Gastrocnemius medialis (tissue), 4 donors: ENCODE measurements at regions of chr3 and their contacts with region 1.

Region 1: GRCh38 chr3:138417559-138417982 is 16.8 kb upstream of the ESYT3 start:
- DNase-seq: peak; percentile 64 to 77
- ATAC-seq: peak; percentile 85 to 96
- H3K4me3 ChIP-seq: no peak overlapping the region
- H3K27ac ChIP-seq: no peak overlapping the region
- H3K4me1 ChIP-seq: peaks cover 7 to 10% of the 10 kb centered on the region in 2 donors
- H3K27me3 ChIP-seq: no peaks in the 10 kb centered on the region
- CTCF ChIP-seq: peak; percentile 83 to 93 (median 86)
- POLR2A ChIP-seq: no peak

Region 2: DNA sequence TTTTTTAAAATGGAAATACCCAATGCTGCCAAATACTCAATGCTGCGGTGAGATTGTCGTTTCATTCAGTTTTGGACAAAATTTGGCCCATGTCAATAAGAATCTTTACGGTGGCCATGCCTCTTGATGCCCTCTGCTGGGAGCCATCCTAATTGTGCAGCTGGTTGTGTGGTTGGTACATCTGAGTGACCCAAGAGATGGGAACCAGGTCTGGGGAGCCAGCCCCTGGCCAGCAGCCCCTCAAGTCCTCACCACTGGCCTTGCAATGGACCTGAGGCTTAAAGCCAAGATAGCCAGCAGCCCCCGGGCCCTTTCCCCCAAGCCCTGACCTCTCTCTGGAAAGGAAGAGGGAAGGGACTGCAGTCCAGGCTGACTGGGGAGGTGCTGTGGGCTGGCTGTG is 19.6 kb before region 1 on chr3:
- in situ Hi-C with region 1: no loop called
- intact Hi-C with region 1: loop called (anchors 1 kb)
- DNase-seq: no peak
- ATAC-seq: peak in 1 of 2 donors; percentile 49
- H3K4me3 ChIP-seq: no peak overlapping the region
- H3K27ac ChIP-seq: peak overlapping the region in 1 of 4 donors; percentile 34
- H3K4me1 ChIP-seq: peaks cover 38 to 49% of the 10 kb centered on the region in 2 donors
- H3K27me3 ChIP-seq: no peaks in the 10 kb centered on the region
- CTCF ChIP-seq: peak in 3 of 5 experiments; percentile 26 to 33 (median 32)
- POLR2A ChIP-seq: no peak

Region 3: GRCh38 chr3:138915503-138916498 is 498.2 kb after region 1 on chr3:
- in situ Hi-C with region 1: loop called in 3 of 4 experiments (anchors 25 kb)
- intact Hi-C with region 1: loop called (anchors 5 kb)
- DNase-seq: peak; percentile 82 to 94
- ATAC-seq: peak; percentile 91 to 93
- H3K4me3 ChIP-seq: peak overlapping the region; percentile 80 to 98 (median 87)
- H3K27ac ChIP-seq: peak overlapping the region; percentile 92 to 95 (median 94)
- H3K4me1 ChIP-seq: peaks cover 3 to 4% of the 10 kb centered on the region in 2 donors
- H3K27me3 ChIP-seq: no peaks in the 10 kb centered on the region
- CTCF ChIP-seq: peak; percentile 86 to 94 (median 89)
- POLR2A ChIP-seq: no peak

Region 4: DNA sequence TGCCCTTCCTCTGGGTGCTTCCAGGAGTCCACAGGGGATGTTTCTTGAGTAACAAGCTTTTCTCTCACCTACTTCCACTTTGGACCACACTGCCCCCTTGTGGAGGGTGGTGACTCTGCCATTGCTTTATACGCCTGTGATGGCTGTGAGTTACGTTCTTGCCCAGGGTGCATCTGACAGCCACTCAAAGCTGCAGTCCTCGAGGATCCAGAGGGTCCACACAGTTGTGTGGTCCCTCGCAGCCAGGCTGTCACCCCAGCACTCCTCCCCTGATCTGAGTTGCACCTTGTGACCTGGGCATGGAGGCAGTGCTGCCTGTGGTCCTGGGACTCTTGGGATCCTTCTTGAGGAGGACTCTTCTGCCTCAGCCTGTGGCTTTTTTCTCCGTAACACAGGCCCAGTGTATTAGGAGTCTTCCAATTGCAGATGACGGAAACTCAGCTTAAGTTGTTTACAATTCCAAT is 506.0 kb after region 1 on chr3:
- in situ Hi-C with region 1: loop called in 3 of 4 experiments (anchors 25 kb)
- intact Hi-C with region 1: loop called (anchors 5 kb)
- DNase-seq: peak; percentile 49 to 68
- ATAC-seq: peak; percentile 85 to 94
- H3K4me3 ChIP-seq: no peak overlapping the region
- H3K27ac ChIP-seq: no peak overlapping the region
- H3K4me1 ChIP-seq: no peaks in the 10 kb centered on the region
- H3K27me3 ChIP-seq: no peaks in the 10 kb centered on the region
- CTCF ChIP-seq: peak; percentile 66 to 93 (median 79)
- POLR2A ChIP-seq: no peak